Heart left ventricle (tissue), 16 donors: ENCODE measurements at regions of chr16 and their contacts with region 1.

Region 1: GRCh38 chr16:30703971-30704370 is 5.0 kb downstream of the SRCAP start:
- DNase-seq: no peak
- ATAC-seq: no peak
- H3K4me3 ChIP-seq: no peak overlapping the region
- H3K27ac ChIP-seq: no peak overlapping the region
- H3K4me1 ChIP-seq: peaks cover 6 to 28% (median 22%) of the 10 kb centered on the region in 12 donors
- H3K27me3 ChIP-seq: no peaks in the 10 kb centered on the region
- CTCF ChIP-seq: no peak
- POLR2A ChIP-seq: no peak

Region 2: GRCh38 chr16:30724641-30725417 is 20.9 kb after region 1 on chr16:
- intact Hi-C with region 1: loop called in 1 of 10 experiments (anchors 2 kb)
- DNase-seq: peak in 4 of 5 donors; percentile 43 to 72 (median 60)
- ATAC-seq: peak; percentile 63 to 81 (median 70)
- H3K4me3 ChIP-seq: no peak overlapping the region
- H3K27ac ChIP-seq: peak overlapping the region in 7 of 12 donors; percentile 11 to 80 (median 29)
- H3K4me1 ChIP-seq: peaks cover 0 to 40% (median 0%) of the 10 kb centered on the region in 12 donors
- H3K27me3 ChIP-seq: no peaks in the 10 kb centered on the region
- CTCF ChIP-seq: no peak
- POLR2A ChIP-seq: no peak